Endothelial cell of umbilical vein (primary cell): ENCODE measurements at regions of chr1 and their contacts with region 1.

Region 1: GRCh38 chr1:211654838-211655787 is 20.3 kb downstream of the NEK2 start:
- DNase-seq: peak; percentile 87
- H3K4me3 ChIP-seq: no peak overlapping the region
- H3K27ac ChIP-seq: peak overlapping the region; percentile 80
- H3K4me1 ChIP-seq: peaks cover 20% of the 10 kb centered on the region
- H3K27me3 ChIP-seq: no peaks in the 10 kb centered on the region
- CTCF ChIP-seq: peak; percentile 89 to 96
- POLR2A ChIP-seq: no peak

Region 2: DNA sequence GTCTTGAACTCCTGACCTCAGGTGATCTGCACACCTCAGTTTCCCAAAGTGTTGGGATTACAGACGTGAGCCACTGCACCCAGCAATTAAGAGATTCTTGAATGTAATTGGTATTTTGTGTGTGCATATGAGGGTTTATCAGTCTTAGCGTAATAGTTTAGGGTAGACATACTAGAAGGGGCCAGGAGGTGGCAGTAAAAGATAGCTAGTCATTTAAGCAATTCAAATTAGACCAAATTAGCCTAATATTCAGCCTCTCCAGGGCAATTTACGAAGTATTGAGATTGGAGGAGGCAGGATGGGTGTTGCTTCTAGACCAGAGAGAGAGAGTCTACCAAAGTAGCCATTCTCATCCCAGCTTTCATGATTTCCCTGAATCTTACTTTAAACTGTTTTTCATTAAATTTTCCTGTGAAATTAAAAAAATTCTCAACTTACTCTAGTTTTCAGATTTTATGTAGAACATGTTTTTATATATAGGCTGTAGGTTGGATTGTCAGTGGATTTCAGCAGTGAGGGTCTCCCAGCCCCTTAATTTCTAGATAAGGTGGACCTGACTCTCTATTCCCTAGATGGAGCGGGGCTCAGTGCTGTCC is 1206.7 kb before region 1 on chr1:
- CTCF ChIA-PET with region 1: interaction called, 4 read pairs
- POLR2A ChIA-PET with region 1: no interaction called
- dilution Hi-C with region 1: no loop called
- intact Hi-C with region 1: loop called (anchors 1 kb)
- DNase-seq: peak; percentile 62
- H3K4me3 ChIP-seq: no peak overlapping the region
- H3K27ac ChIP-seq: no peak overlapping the region
- H3K4me1 ChIP-seq: no peaks in the 10 kb centered on the region
- H3K27me3 ChIP-seq: peaks cover 0 to 3% of the 10 kb centered on the region in 2 experiments
- CTCF ChIP-seq: peak; percentile 32 to 50
- POLR2A ChIP-seq: no peak

Region 3: GRCh38 chr1:211258756-211259637 is 396.1 kb before region 1 on chr1 and contains the start of gene RCOR3:
- CTCF ChIA-PET with region 1: no interaction called
- POLR2A ChIA-PET with region 1: no interaction called
- dilution Hi-C with region 1: no loop called
- intact Hi-C with region 1: loop called (anchors 1 kb)
- DNase-seq: peak; percentile 80
- H3K4me3 ChIP-seq: peak within 1 kb of the TSS; percentile 84 to 95 (median 86)
- H3K27ac ChIP-seq: peak within 1 kb of the TSS; percentile 85
- H3K4me1 ChIP-seq: peaks cover 13% of the 10 kb centered on the region
- H3K27me3 ChIP-seq: no peaks in the 10 kb centered on the region
- CTCF ChIP-seq: peak; percentile 50 to 74
- POLR2A ChIP-seq: peak; percentile 14
- total RNA-seq, gene RCOR3: 34.0 and 35.7 TPM in 2 replicates

Region 4: DNA sequence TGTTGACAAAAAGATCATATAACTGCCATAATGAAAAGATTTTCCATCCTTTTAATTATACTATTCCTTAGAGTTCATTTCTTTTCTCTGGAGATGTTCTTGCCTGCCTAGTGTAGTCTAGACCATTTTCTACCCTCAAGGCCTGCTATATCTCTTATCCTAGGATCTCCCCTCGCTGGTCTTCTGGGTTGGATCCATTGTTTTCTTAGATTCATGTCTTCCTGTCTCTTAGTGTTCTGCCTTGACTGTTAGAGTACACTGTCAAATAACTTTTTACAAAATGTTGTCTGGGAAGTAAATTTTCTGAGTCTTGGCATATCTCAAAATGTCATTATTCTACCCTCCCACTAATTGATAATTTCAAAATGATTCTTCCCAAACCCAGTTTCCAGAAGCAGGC is 261.9 kb before region 1 on chr1:
- CTCF ChIA-PET with region 1: no interaction called
- POLR2A ChIA-PET with region 1: no interaction called
- dilution Hi-C with region 1: no loop called
- intact Hi-C with region 1: no loop called
- DNase-seq: no peak
- H3K4me3 ChIP-seq: no peak overlapping the region
- H3K27ac ChIP-seq: no peak overlapping the region
- H3K4me1 ChIP-seq: no peaks in the 10 kb centered on the region
- H3K27me3 ChIP-seq: no peaks in the 10 kb centered on the region
- CTCF ChIP-seq: no peak
- POLR2A ChIP-seq: no peak

Region 5: GRCh38 chr1:211469938-211470529 is 185.1 kb before region 1 on chr1:
- CTCF ChIA-PET with region 1: interaction called, 17 read pairs
- POLR2A ChIA-PET with region 1: no interaction called
- dilution Hi-C with region 1: no loop called
- intact Hi-C with region 1: loop called (anchors 1 kb)
- DNase-seq: peak; percentile 80
- H3K4me3 ChIP-seq: no peak overlapping the region
- H3K27ac ChIP-seq: no peak overlapping the region
- H3K4me1 ChIP-seq: peaks cover 20% of the 10 kb centered on the region
- H3K27me3 ChIP-seq: peaks cover 0 to 7% of the 10 kb centered on the region in 2 experiments
- CTCF ChIP-seq: peak; percentile 92 to 96
- POLR2A ChIP-seq: no peak

Region 6: GRCh38 chr1:211551628-211552460 is 103.3 kb before region 1 on chr1:
- CTCF ChIA-PET with region 1: no interaction called
- POLR2A ChIA-PET with region 1: no interaction called
- dilution Hi-C with region 1: no loop called
- intact Hi-C with region 1: loop called (anchors 1 kb)
- DNase-seq: peak; percentile 78
- H3K4me3 ChIP-seq: no peak overlapping the region
- H3K27ac ChIP-seq: peak overlapping the region; percentile 84
- H3K4me1 ChIP-seq: peaks cover 18% of the 10 kb centered on the region
- H3K27me3 ChIP-seq: no peaks in the 10 kb centered on the region
- CTCF ChIP-seq: no peak
- POLR2A ChIP-seq: peak; percentile 49

Region 7: DNA sequence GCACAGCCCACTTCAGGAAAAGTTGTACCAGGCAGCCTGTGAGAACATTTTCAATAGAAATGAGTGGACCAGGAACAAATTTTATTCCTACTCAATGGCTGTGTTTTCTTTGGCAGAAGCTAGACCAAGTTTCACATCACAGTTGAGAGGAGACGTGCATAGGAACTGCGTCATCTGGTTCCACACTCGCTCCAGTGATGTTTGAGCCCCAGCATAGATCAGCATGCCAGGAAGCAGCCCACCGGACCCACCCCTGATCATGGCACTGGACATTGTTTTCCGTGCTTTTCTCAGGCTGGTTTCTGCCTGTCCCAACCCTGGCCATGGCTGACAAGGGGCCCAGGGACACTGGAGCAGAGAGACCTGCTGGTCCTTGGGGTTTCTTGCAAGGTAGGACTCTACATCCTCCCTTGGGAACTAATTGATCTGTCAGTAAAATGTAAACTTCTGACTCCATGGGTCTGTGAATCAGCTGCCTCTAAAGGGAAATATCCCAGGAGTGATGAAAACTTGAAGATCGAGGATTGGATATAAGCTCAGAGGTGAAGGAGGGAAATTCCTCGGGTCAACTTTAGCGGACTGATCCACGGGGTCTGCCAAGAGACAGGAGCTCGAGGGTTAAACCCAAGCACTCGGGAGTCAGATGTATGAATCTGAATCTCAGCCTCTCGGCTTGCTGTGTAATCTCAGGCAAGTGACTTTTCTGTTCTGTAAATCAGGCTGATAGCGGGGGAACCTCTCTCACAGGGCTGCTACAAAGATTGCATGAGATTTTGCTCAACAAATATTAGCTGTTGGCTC is 15.4 kb before region 1 on chr1:
- CTCF ChIA-PET with region 1: interaction called, 15 read pairs
- POLR2A ChIA-PET with region 1: interaction called, 4 read pairs
- dilution Hi-C with region 1: no loop called
- intact Hi-C with region 1: loop called (anchors 1 kb)
- DNase-seq: peak; percentile 96
- H3K4me3 ChIP-seq: peak overlapping the region in 2 of 3 experiments; percentile 31 to 37
- H3K27ac ChIP-seq: peak overlapping the region; percentile 95
- H3K4me1 ChIP-seq: peaks cover 27% of the 10 kb centered on the region
- H3K27me3 ChIP-seq: no peaks in the 10 kb centered on the region
- CTCF ChIP-seq: no peak
- POLR2A ChIP-seq: no peak

Region 8: GRCh38 chr1:211724687-211725196 is 69.6 kb after region 1 on chr1:
- CTCF ChIA-PET with region 1: no interaction called
- POLR2A ChIA-PET with region 1: no interaction called
- dilution Hi-C with region 1: no loop called
- intact Hi-C with region 1: no loop called
- DNase-seq: no peak
- H3K4me3 ChIP-seq: no peak overlapping the region
- H3K27ac ChIP-seq: no peak overlapping the region
- H3K4me1 ChIP-seq: no peaks in the 10 kb centered on the region
- H3K27me3 ChIP-seq: peaks cover 0 to 1% of the 10 kb centered on the region in 2 experiments
- CTCF ChIP-seq: no peak
- POLR2A ChIP-seq: no peak

Region 9: GRCh38 chr1:211788626-211789025 is 133.5 kb after region 1 on chr1:
- CTCF ChIA-PET with region 1: no interaction called
- POLR2A ChIA-PET with region 1: no interaction called
- dilution Hi-C with region 1: no loop called
- intact Hi-C with region 1: no loop called
- DNase-seq: no peak
- H3K4me3 ChIP-seq: no peak overlapping the region
- H3K27ac ChIP-seq: no peak overlapping the region
- H3K4me1 ChIP-seq: peaks cover 7% of the 10 kb centered on the region
- H3K27me3 ChIP-seq: no peaks in the 10 kb centered on the region
- CTCF ChIP-seq: no peak
- POLR2A ChIP-seq: no peak